ENCODE measurements at regions of chr15 and their contacts with region 1.

Region 1: GRCh38 chr15:95760501-95760900 is 570.0 kb upstream of the NR2F2 start:
- DNase-seq: peak; percentile 40 to 86 (median 68)
- H3K4me3 ChIP-seq: no peak overlapping the region
- H3K27ac ChIP-seq: peak overlapping the region in 1 of 2 donors; percentile 59
- H3K4me1 ChIP-seq: peaks cover 2% of the 10 kb centered on the region
- H3K27me3 ChIP-seq: no peaks in the 10 kb centered on the region
- CTCF ChIP-seq: no peak
- EP300 ChIP-seq: no peak
- POLR2A ChIP-seq: no peak

Region 2: DNA sequence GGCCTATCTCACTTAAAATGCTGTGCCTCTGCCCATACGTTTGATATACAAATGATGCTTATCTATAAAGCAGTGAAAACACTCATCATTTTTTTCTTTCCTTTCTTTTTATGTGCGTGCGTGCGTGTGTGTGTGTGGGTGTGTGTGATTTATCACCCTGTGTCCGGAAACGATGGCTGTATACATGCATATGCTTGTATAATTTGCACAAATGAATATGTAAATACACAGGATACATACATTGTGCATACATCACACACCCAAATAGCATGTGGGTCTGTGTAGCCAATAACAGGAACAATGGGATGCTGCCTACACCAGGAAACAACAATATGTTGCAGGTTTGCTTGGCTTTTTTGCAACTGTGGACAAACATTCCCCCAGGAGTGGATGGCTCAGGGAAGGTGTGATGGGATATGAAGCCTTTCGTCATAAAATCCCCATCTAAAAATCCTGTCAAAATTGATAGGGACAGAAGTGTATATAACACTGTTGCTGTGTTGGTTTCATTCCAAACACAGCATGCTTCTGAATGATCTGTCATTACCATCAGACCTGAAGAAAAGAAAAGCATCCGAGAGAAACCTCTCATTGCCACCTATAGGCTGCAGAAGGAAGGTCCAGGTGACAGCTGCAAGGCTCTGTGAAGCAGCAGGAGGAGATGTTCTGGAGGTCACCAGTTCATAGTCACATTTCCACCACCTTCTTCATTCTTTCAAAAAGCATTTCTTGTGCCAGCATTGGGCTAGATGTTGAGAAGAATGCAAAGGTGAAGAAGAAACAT is 66.1 kb after region 1 on chr15:
- intact Hi-C with region 1: loop called in 1 of 4 experiments (anchors 2 kb)
- DNase-seq: no peak
- H3K4me3 ChIP-seq: no peak overlapping the region
- H3K27ac ChIP-seq: no peak overlapping the region
- H3K4me1 ChIP-seq: peaks cover 2% of the 10 kb centered on the region
- H3K27me3 ChIP-seq: no peaks in the 10 kb centered on the region
- CTCF ChIP-seq: no peak
- EP300 ChIP-seq: no peak
- POLR2A ChIP-seq: no peak

Measured in ovary (tissue), 10 donors.